ENCODE measurements at regions of chr14 and their contacts with region 1.

Region 1: GRCh38 chr14:87411370-87411769 is 581.6 kb downstream of the GALC start:
- DNase-seq: no peak
- ATAC-seq: no peak
- H3K4me3 ChIP-seq: no peak overlapping the region
- H3K27ac ChIP-seq: no peak overlapping the region
- H3K4me1 ChIP-seq: no peaks in the 10 kb centered on the region
- H3K27me3 ChIP-seq: no peaks in the 10 kb centered on the region
- CTCF ChIP-seq: no peak
- EP300 ChIP-seq: no peak
- POLR2A ChIP-seq: no peak
- RAD21 ChIP-seq: no peak

Region 2: DNA sequence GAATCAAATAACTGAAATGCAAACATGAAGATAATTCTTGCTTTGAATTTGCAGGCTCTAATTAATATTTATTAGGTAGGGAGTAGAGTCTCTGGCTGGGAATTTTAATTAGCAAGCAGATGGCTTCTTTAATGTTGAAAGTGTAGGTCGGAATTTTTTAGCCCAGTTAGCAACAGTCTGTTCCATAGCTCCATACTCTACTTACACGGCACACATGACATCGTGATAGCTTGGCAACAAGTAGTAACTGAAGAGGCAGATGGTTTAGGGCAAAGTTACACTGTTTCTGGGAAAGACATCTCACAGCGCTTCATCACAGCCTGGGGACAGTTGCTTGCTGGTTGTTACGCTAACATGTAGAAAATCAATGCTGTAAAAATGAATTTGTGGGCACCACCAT is 129.1 kb before region 1 on chr14:
- CTCF ChIA-PET with region 1: no interaction called
- POLR2A ChIA-PET with region 1: no interaction called
- in situ Hi-C with region 1: no loop called
- intact Hi-C with region 1: no loop called
- DNase-seq: no peak
- ATAC-seq: no peak
- H3K4me3 ChIP-seq: no peak overlapping the region
- H3K27ac ChIP-seq: no peak overlapping the region
- H3K4me1 ChIP-seq: no peaks in the 10 kb centered on the region
- H3K27me3 ChIP-seq: no peaks in the 10 kb centered on the region
- CTCF ChIP-seq: no peak
- EP300 ChIP-seq: no peak
- POLR2A ChIP-seq: no peak
- RAD21 ChIP-seq: no peak

Region 3: GRCh38 chr14:87368752-87369151 is 42.6 kb before region 1 on chr14:
- CTCF ChIA-PET with region 1: no interaction called
- POLR2A ChIA-PET with region 1: no interaction called
- in situ Hi-C with region 1: no loop called
- intact Hi-C with region 1: no loop called
- DNase-seq: no peak
- ATAC-seq: no peak
- H3K4me3 ChIP-seq: no peak overlapping the region
- H3K27ac ChIP-seq: no peak overlapping the region
- H3K4me1 ChIP-seq: no peaks in the 10 kb centered on the region
- H3K27me3 ChIP-seq: no peaks in the 10 kb centered on the region
- CTCF ChIP-seq: no peak
- EP300 ChIP-seq: no peak
- POLR2A ChIP-seq: no peak
- RAD21 ChIP-seq: no peak

Region 4: DNA sequence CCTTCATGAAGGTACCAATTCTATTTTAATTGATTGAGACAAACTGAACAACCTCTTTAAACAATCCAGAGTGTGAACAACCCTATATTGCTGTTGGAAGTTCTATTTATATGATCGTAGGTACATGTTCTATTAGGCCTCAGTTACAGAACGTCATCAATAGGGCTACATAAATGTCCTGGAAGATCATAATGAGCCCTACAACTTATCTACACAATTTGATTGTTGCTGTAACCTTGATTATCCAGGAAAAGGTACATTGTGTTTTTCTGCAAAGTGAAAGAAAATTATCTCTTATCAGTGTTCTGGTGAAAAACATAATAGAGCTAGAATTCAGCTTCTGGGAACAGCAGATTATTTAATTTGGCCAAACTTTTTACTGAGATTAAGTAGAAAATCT is 31.3 kb before region 1 on chr14:
- CTCF ChIA-PET with region 1: no interaction called
- POLR2A ChIA-PET with region 1: no interaction called
- in situ Hi-C with region 1: no loop called
- intact Hi-C with region 1: no loop called
- DNase-seq: no peak
- ATAC-seq: no peak
- H3K4me3 ChIP-seq: no peak overlapping the region
- H3K27ac ChIP-seq: no peak overlapping the region
- H3K4me1 ChIP-seq: no peaks in the 10 kb centered on the region
- H3K27me3 ChIP-seq: no peaks in the 10 kb centered on the region
- CTCF ChIP-seq: no peak
- EP300 ChIP-seq: no peak
- POLR2A ChIP-seq: no peak
- RAD21 ChIP-seq: no peak

Region 5: DNA sequence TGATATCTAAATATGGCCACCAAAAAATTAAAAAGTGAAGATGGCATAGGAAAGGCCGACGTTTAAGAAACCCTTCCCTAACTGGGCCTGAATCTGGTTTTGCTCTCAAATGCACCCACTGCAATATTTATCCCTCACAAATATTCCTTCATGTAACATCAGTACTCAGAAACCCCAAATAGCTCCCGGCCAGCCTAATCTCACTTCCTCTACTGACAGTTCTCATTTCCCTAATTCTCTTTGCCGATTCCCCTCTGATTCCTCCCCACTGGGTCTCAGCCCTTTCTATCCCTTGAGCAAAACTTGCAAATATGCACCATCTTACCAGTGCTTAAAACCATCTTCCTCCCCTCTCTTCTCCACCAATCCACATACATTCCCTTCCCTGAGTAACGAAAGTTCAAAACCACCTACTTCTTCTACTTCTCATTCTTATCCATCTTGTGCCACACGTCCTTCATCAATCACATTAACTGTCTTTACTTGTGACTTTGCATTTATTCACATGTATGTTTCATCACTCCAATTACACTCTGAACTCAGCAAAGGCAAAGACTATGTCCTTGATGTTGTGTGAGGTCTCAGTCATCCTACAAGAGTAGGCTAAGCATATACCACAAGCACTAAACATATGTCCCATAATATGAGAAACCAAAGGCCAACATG is 888.6 kb after region 1 on chr14:
- CTCF ChIA-PET with region 1: no interaction called
- POLR2A ChIA-PET with region 1: no interaction called
- in situ Hi-C with region 1: loop called (anchors 10 kb)
- intact Hi-C with region 1: no loop called
- DNase-seq: no peak
- ATAC-seq: no peak
- H3K4me3 ChIP-seq: no peak overlapping the region
- H3K27ac ChIP-seq: no peak overlapping the region
- H3K4me1 ChIP-seq: no peaks in the 10 kb centered on the region
- H3K27me3 ChIP-seq: no peaks in the 10 kb centered on the region; a peak in 1 of 5 replicates
- CTCF ChIP-seq: no peak
- EP300 ChIP-seq: no peak
- POLR2A ChIP-seq: no peak
- RAD21 ChIP-seq: no peak